Heart left ventricle (tissue), 16 donors: ENCODE measurements at regions of chr18 and their contacts with region 1.

Region 1: GRCh38 chr18:23131693-23132319 is 3.5 kb upstream of the CABLES1 start:
- DNase-seq: peak in 4 of 5 donors; percentile 39 to 76 (median 62)
- ATAC-seq: peak in 3 of 4 donors; percentile 67 to 75 (median 72)
- H3K4me3 ChIP-seq: no peak overlapping the region
- H3K27ac ChIP-seq: peak overlapping the region in 1 of 12 donors; percentile 9
- H3K4me1 ChIP-seq: peaks cover 0 to 38% (median 10%) of the 10 kb centered on the region in 12 donors
- H3K27me3 ChIP-seq: peaks cover 7 to 42% (median 18%) of the 10 kb centered on the region in 9 donors
- CTCF ChIP-seq: peak; percentile 69 to 90 (median 80)
- POLR2A ChIP-seq: no peak

Region 2: DNA sequence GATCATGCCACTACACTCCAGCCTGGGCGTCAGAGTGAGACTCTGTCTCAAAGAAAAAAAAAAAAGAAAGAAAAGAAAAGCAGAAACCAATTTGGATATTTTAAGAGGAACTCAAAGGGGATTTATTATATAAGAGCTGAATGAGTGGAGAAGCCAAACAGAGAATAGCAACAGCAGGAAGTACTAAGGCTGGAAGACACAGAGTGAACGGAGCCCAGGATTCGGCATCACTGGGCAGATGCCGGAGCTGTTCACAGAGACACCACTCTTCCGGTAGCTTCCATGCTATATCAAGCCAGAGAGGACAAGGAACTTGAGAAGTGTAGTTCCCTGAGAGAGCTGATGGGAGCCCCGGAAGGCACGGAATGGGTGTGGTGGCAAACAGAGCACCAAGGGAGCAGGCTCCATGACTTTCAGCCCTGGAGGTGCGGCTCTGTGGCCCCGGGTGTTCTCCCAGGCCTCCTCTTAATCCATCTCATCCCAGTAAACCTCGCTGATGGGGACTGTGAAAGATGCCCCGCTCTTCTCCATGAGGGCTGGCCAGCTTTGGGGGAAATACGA is 43.4 kb before region 1 on chr18:
- intact Hi-C with region 1: no loop called
- DNase-seq: no peak
- ATAC-seq: peak in 2 of 4 donors; percentile 13 to 24
- H3K4me3 ChIP-seq: no peak overlapping the region
- H3K27ac ChIP-seq: no peak overlapping the region
- H3K4me1 ChIP-seq: peaks cover 0 to 22% (median 0%) of the 10 kb centered on the region in 12 donors
- H3K27me3 ChIP-seq: peaks cover 0 to 4% (median 0%) of the 10 kb centered on the region in 9 donors
- CTCF ChIP-seq: no peak
- POLR2A ChIP-seq: no peak

Region 3: DNA sequence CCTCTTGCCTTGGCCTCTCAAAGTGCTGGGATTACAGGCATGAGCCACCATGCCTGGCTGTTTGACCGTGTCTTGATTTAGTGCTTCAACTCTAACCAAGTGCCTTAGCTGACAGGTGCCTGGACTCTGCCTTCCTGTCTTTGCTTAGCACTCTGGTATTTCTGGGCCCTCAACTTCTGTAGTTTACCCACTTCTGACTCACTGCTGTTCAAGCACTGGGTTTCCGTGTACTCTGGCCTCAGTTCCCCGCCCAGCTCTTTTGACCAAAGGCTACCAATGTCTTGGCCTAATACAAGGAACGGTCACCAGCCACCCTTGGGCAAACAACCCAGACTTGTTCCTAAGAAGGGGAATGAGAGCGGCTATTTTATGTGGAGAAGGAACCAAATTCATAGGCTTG is 32.2 kb before region 1 on chr18:
- intact Hi-C with region 1: no loop called
- DNase-seq: no peak
- ATAC-seq: no peak
- H3K4me3 ChIP-seq: no peak overlapping the region
- H3K27ac ChIP-seq: no peak overlapping the region
- H3K4me1 ChIP-seq: no peaks in the 10 kb centered on the region
- H3K27me3 ChIP-seq: peaks cover 0 to 10% (median 0%) of the 10 kb centered on the region in 9 donors
- CTCF ChIP-seq: no peak
- POLR2A ChIP-seq: no peak

Region 4: GRCh38 chr18:23194155-23194996 is 62.6 kb after region 1 on chr18:
- intact Hi-C with region 1: loop called in 3 of 10 experiments (anchors 5 to 10 kb)
- DNase-seq: no peak
- ATAC-seq: peak in 2 of 4 donors; percentile 30 to 76
- H3K4me3 ChIP-seq: peak overlapping the region in 2 of 12 donors; percentile 10 to 12
- H3K27ac ChIP-seq: peak overlapping the region in 10 of 12 donors; percentile 11 to 66 (median 46)
- H3K4me1 ChIP-seq: peaks cover 0 to 33% (median 12%) of the 10 kb centered on the region in 12 donors
- H3K27me3 ChIP-seq: no peaks in the 10 kb centered on the region
- CTCF ChIP-seq: no peak
- POLR2A ChIP-seq: no peak

Region 5: DNA sequence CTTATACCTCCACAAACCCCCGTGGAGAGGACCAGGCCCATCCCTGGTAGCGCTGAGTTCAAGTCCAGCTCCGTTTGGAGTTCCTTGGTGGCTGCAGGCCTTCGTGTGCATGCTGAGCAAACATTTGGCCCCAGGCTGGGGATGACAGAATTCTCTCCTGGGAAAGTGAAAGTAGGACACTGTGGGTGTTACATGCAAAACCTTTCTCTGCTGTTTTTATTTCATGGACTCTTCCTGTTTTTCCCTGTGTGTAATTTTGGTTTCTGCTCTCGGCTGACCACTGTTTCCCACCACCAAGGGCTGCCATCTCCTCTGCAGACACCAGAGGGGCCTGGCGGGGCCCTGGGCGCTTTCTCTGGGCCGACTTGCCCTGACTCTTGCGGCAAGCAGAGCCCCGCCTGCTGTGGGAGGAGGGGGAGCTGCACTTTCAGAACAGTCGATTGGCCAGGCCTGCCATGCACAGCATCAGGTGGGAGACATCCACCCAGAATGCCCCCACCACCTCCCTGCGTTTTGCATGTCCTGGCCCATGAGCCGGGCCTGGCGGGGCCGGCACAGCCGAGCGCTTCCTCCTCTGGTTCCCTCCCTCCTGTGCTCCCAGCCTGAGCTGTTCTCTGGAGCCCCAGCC is 105.8 kb after region 1 on chr18:
- intact Hi-C with region 1: loop called in 4 of 10 experiments (anchors 5 to 10 kb)
- DNase-seq: peak; percentile 50 to 79 (median 56)
- ATAC-seq: peak; percentile 65 to 86 (median 80)
- H3K4me3 ChIP-seq: peak overlapping the region in 10 of 12 donors; percentile 15 to 52 (median 40)
- H3K27ac ChIP-seq: peak overlapping the region; percentile 52 to 89 (median 76)
- H3K4me1 ChIP-seq: peaks cover 4 to 29% (median 20%) of the 10 kb centered on the region in 12 donors
- H3K27me3 ChIP-seq: no peaks in the 10 kb centered on the region
- CTCF ChIP-seq: peak in 8 of 12 donors; percentile 7 to 50 (median 26)
- POLR2A ChIP-seq: no peak

Region 6: GRCh38 chr18:23276451-23276850 is 144.6 kb after region 1 on chr18:
- intact Hi-C with region 1: loop called in 4 of 10 experiments (anchors 5 to 10 kb)
- DNase-seq: peak in 4 of 5 donors; percentile 37 to 72 (median 44)
- ATAC-seq: peak; percentile 93 to 95 (median 93)
- H3K4me3 ChIP-seq: no peak overlapping the region
- H3K27ac ChIP-seq: peak overlapping the region in 7 of 12 donors; percentile 18 to 52 (median 35)
- H3K4me1 ChIP-seq: peaks cover 0 to 23% (median 0%) of the 10 kb centered on the region in 12 donors
- H3K27me3 ChIP-seq: no peaks in the 10 kb centered on the region
- CTCF ChIP-seq: peak in 3 of 12 donors; percentile 24 to 30 (median 28)
- POLR2A ChIP-seq: no peak

Region 7: DNA sequence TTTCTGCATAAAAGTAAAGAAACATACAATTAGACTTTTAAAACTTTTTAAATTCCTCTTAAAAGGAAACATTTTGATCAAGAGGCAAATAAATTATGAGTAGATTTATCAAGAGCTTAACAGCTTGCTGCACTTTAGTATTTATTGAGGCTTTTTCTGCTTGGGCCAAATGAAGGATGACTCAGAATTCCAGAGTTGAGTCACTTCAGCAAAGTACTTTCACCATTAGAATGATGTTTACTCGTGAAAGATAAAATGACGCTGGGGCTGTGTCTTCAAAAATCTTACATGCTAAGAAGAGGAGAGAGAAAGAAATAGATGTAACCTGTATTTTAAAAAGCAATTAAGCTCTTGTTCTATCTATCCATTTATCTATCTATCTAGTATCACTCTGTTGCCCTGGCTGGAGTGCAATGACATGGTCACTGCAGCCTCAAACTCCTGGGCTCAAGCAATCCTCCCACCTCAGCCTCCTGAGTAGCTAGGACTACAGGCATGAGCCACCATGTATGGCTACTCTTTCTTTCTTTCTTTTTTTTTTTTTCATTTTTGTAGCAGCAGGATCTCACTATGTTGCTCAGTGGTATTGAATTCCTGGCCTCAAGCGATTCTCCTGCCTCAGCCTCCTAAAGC is 246.0 kb after region 1 on chr18:
- intact Hi-C with region 1: loop called in 6 of 10 experiments (anchors 1 to 5 kb)
- DNase-seq: no peak
- ATAC-seq: peak in 1 of 4 donors; percentile 70
- H3K4me3 ChIP-seq: no peak overlapping the region
- H3K27ac ChIP-seq: peak overlapping the region in 8 of 12 donors; percentile 0 to 73 (median 37)
- H3K4me1 ChIP-seq: peaks cover 0 to 12% (median 6%) of the 10 kb centered on the region in 12 donors
- H3K27me3 ChIP-seq: no peaks in the 10 kb centered on the region
- CTCF ChIP-seq: no peak
- POLR2A ChIP-seq: no peak

Region 8: GRCh38 chr18:23503038-23503962 is 371.5 kb after region 1 on chr18 and contains the start of gene RMC1:
- intact Hi-C with region 1: loop called in 1 of 10 experiments (anchors 10 kb)
- DNase-seq: peak; percentile 97 to 99 (median 98)
- ATAC-seq: peak; percentile 98 to 99 (median 98)
- H3K4me3 ChIP-seq: peak within 1 kb of the TSS; percentile 81 to 100 (median 98)
- H3K27ac ChIP-seq: peak within 1 kb of the TSS; percentile 82 to 96 (median 90)
- H3K4me1 ChIP-seq: peaks cover 0 to 43% (median 23%) of the 10 kb centered on the region in 12 donors
- H3K27me3 ChIP-seq: no peaks in the 10 kb centered on the region
- CTCF ChIP-seq: peak in 5 of 12 donors; percentile 8 to 41 (median 30)
- POLR2A ChIP-seq: peak; percentile 24 to 87
- total RNA-seq, gene RMC1: 12.2 to 24.2 (median 17.3) TPM